HepG2 (cell line): ENCODE measurements at regions of chr3 and their contacts with region 1.

Region 1: DNA sequence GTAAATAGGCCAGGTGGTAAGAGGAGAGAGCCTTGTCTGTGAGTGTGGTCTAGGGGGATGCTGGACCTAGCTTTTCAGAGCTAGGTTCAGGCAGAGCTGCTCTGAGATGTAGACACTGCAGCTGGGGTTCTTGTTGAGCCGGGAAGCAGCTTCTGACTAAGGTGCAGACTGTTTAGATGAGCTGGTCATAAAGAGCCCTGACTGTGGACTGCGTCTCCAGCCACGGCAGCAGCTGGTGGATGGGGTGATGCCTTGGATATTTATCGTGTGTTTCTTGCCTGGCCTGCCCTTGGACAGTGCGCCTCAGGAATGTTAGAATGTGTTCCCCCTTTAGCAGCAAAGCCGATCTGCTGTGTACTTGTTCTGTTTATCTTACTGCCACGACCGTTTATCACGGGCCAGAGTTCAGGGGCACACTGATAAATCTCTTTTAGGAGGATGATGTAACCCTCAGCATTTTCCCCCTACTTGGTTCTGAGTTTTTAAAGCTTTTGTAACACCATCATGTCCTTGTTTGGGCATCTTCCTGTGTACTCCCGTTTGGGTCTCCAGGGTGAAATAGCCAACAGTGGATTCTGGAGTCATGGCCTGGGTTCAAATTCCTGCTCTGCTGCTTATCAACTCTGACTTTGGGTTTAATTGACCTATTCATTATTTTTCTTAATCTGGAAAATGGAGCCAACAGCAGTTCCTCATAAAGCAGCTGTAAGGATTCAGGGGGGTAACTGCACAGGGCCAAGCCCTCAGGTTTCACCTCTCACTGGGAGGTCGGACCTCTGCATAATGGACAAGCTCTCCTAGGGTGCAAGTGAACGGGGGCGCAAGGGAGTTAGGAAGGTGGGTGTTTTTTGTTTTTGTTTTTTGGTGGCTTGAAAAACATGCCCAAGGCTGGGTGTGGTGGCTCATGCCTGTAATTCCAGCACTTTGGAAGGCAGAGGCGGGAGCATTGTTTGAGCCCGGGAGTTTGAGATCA is 51.4 kb downstream of the FLNB start:
- DNase-seq: peak; percentile 99
- ATAC-seq: peak; percentile 96
- H3K4me3 ChIP-seq: peak overlapping the region in 1 of 3 experiments; percentile 31; a peak in 2 of 6 replicates
- H3K27ac ChIP-seq: peak overlapping the region; percentile 94
- H3K4me1 ChIP-seq: peaks cover 92% of the 10 kb centered on the region
- H3K27me3 ChIP-seq: no peaks in the 10 kb centered on the region; a peak in 1 of 5 replicates
- CTCF ChIP-seq: 0 out of 2 replicates have a peak, but pooled peaks have one; percentile 16
- EP300 ChIP-seq: peak; percentile 95 to 99
- POLR2A ChIP-seq: peak; percentile 15 to 88; a peak in 3 of 4 replicates
- RAD21 ChIP-seq: peak; percentile 44; the same call in 1 of the 2 replicates

Region 2: GRCh38 chr3:57530071-57530608 is 529.5 kb before region 1 on chr3:
- CTCF ChIA-PET with region 1: no interaction called
- POLR2A ChIA-PET with region 1: no interaction called
- in situ Hi-C with region 1: no loop called
- intact Hi-C with region 1: no loop called
- DNase-seq: no peak
- ATAC-seq: peak; percentile 38; the same call in 1 of the 3 replicates
- H3K4me3 ChIP-seq: no peak overlapping the region
- H3K27ac ChIP-seq: no peak overlapping the region
- H3K4me1 ChIP-seq: 0 out of 2 replicates have a peak, but pooled peaks cover 7% of the 10 kb centered on the region
- H3K27me3 ChIP-seq: no peaks in the 10 kb centered on the region
- CTCF ChIP-seq: no peak
- EP300 ChIP-seq: no peak
- POLR2A ChIP-seq: no peak
- RAD21 ChIP-seq: no peak

Region 3: DNA sequence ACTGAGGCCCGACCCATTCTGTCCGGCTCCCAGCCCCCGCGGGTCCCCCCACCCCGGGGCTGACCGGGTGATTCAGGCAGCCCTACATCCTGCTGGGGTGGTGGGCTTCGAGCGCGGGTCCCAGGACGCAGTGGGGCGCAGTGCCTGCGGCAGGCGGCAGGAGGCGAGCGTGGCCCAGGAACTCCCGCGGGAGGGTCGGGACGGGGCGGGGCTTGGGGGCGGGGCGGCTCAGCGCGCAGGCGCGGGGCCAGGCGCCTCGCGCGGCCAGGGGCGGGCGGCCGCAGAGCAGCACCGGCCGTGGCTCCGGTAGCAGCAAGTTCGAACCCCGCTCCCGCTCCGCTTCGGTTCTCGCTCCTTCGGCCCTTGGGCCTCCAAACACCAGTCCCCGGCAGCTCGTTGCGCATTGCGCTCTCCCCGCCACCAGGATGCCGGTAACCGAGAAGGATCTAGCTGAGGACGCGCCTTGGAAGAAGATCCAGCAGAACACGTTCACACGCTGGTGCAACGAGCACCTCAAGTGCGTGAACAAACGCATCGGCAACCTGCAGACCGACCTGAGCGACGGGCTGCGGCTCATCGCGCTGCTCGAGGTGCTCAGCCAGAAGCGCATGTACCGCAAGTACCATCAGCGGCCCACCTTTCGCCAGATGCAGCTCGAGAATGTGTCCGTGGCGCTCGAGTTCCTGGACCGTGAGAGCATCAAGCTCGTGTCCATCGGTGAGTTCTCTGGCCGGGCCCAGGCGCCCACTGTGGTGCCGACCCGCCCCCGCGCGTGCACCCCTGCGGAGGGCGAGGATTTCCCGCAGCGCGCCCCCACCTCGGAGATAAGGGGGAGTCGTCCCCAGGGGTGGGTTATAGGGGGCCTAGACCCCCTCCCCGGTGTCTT is 51.3 kb before region 1 on chr3 and contains the start of gene FLNB:
- CTCF ChIA-PET with region 1: no interaction called
- POLR2A ChIA-PET with region 1: interaction called, 19 read pairs
- in situ Hi-C with region 1: no loop called
- intact Hi-C with region 1: no loop called
- DNase-seq: peak; percentile 45
- ATAC-seq: peak; percentile 77
- H3K4me3 ChIP-seq: peak within 1 kb of the TSS; percentile 93 to 100 (median 99)
- H3K27ac ChIP-seq: peak within 1 kb of the TSS; percentile 74
- H3K4me1 ChIP-seq: peaks cover 55% of the 10 kb centered on the region
- H3K27me3 ChIP-seq: no peaks in the 10 kb centered on the region; a peak in 1 of 5 replicates
- CTCF ChIP-seq: peak; percentile 86
- EP300 ChIP-seq: no peak
- POLR2A ChIP-seq: peak; percentile 92 to 98
- RAD21 ChIP-seq: peak; percentile 83
- total RNA-seq, gene FLNB: 48.8 and 130 TPM in 2 replicates

Region 4: GRCh38 chr3:58025837-58026569 is 33.6 kb before region 1 on chr3:
- CTCF ChIA-PET with region 1: no interaction called
- POLR2A ChIA-PET with region 1: interaction called, 10 read pairs
- in situ Hi-C with region 1: no loop called
- intact Hi-C with region 1: loop called (anchors 5 kb)
- DNase-seq: peak; percentile 39
- ATAC-seq: no peak; the same call in 2 of the 3 replicates
- H3K4me3 ChIP-seq: no peak overlapping the region
- H3K27ac ChIP-seq: peak overlapping the region; percentile 24
- H3K4me1 ChIP-seq: peaks cover 90% of the 10 kb centered on the region
- H3K27me3 ChIP-seq: no peaks in the 10 kb centered on the region
- CTCF ChIP-seq: no peak
- EP300 ChIP-seq: no peak
- POLR2A ChIP-seq: no peak
- RAD21 ChIP-seq: no peak

Region 5: DNA sequence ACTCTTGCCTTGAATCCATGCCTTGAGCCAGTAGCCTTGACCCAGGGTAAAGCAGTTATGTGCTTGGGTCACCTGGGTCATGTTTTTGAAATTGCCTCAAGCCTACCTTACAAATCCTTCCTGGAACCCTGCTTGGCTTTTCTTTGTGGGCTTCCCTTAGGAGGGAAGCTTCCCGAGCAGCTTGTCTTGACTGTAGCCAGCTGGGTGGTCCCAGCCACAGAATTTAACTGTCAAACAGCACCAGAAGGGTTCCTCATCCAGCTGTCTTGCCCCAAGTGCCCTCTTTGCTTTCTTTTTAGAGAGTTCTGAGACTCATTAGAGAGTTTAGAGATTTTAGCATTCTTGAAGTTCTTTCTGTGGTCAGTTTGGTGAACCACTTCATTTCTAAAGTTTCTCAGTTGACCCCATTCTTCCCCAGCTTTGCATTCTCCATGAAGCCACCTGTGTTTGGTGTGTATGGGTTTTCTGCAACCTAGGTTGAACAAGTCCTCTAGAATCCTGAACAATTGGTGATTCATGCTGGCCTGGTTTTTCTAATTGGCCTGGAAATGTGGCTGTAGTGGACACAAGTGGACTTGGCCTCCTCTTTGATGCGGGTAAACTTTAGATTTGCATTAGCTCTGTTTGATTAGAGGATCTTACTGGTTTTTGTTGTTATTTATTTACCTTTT is 17.8 kb before region 1 on chr3:
- CTCF ChIA-PET with region 1: interaction called, 3 read pairs
- POLR2A ChIA-PET with region 1: interaction called, 45 read pairs
- in situ Hi-C with region 1: no loop called
- intact Hi-C with region 1: no loop called
- DNase-seq: peak; percentile 85
- ATAC-seq: peak; percentile 64
- H3K4me3 ChIP-seq: peak overlapping the region in 1 of 3 experiments; percentile 36; a peak in 2 of 6 replicates
- H3K27ac ChIP-seq: peak overlapping the region; percentile 88
- H3K4me1 ChIP-seq: peaks cover 86% of the 10 kb centered on the region
- H3K27me3 ChIP-seq: no peaks in the 10 kb centered on the region
- CTCF ChIP-seq: no peak
- EP300 ChIP-seq: peak in 1 of 2 experiments; percentile 71; a peak in 2 of 4 replicates
- POLR2A ChIP-seq: no peak
- RAD21 ChIP-seq: no peak

Region 6: GRCh38 chr3:58072052-58072762 is 12.6 kb after region 1 on chr3:
- CTCF ChIA-PET with region 1: no interaction called
- POLR2A ChIA-PET with region 1: interaction called, 12 read pairs
- in situ Hi-C with region 1: no loop called
- intact Hi-C with region 1: no loop called
- DNase-seq: no peak
- ATAC-seq: no peak
- H3K4me3 ChIP-seq: no peak overlapping the region
- H3K27ac ChIP-seq: peak overlapping the region; percentile 52
- H3K4me1 ChIP-seq: peaks cover 69% of the 10 kb centered on the region
- H3K27me3 ChIP-seq: no peaks in the 10 kb centered on the region
- CTCF ChIP-seq: no peak
- EP300 ChIP-seq: no peak
- POLR2A ChIP-seq: no peak
- RAD21 ChIP-seq: no peak

Region 7: GRCh38 chr3:58111513-58112186 is 52.0 kb after region 1 on chr3:
- CTCF ChIA-PET with region 1: no interaction called
- POLR2A ChIA-PET with region 1: no interaction called
- in situ Hi-C with region 1: no loop called
- intact Hi-C with region 1: loop called (anchors 2 kb)
- DNase-seq: peak; percentile 84
- ATAC-seq: peak; percentile 82
- H3K4me3 ChIP-seq: no peak overlapping the region
- H3K27ac ChIP-seq: peak overlapping the region; percentile 59
- H3K4me1 ChIP-seq: peaks cover 30% of the 10 kb centered on the region
- H3K27me3 ChIP-seq: no peaks in the 10 kb centered on the region
- CTCF ChIP-seq: no peak
- EP300 ChIP-seq: peak in 1 of 2 experiments; percentile 58; a peak in 1 of 4 replicates
- POLR2A ChIP-seq: no peak
- RAD21 ChIP-seq: no peak

Region 8: GRCh38 chr3:58151637-58152036 is 92.0 kb after region 1 on chr3:
- CTCF ChIA-PET with region 1: no interaction called
- POLR2A ChIA-PET with region 1: no interaction called
- in situ Hi-C with region 1: no loop called
- intact Hi-C with region 1: no loop called
- DNase-seq: no peak
- ATAC-seq: no peak
- H3K4me3 ChIP-seq: no peak overlapping the region
- H3K27ac ChIP-seq: no peak overlapping the region
- H3K4me1 ChIP-seq: no peaks in the 10 kb centered on the region
- H3K27me3 ChIP-seq: no peaks in the 10 kb centered on the region
- CTCF ChIP-seq: no peak
- EP300 ChIP-seq: no peak
- POLR2A ChIP-seq: no peak
- RAD21 ChIP-seq: no peak